ENCODE measurements at regions of chr10 and their contacts with region 1.

Region 1: GRCh38 chr10:103238506-103239252 is 7.0 kb upstream of the RPEL1 start:
- DNase-seq: peak; percentile 82 to 96
- H3K4me3 ChIP-seq: no peak overlapping the region
- H3K27ac ChIP-seq: peak overlapping the region; percentile 100
- H3K4me1 ChIP-seq: peaks cover 58% of the 10 kb centered on the region
- H3K27me3 ChIP-seq: no peaks in the 10 kb centered on the region
- CTCF ChIP-seq: peak; percentile 57; the same call in 1 of the 2 replicates

Region 2: DNA sequence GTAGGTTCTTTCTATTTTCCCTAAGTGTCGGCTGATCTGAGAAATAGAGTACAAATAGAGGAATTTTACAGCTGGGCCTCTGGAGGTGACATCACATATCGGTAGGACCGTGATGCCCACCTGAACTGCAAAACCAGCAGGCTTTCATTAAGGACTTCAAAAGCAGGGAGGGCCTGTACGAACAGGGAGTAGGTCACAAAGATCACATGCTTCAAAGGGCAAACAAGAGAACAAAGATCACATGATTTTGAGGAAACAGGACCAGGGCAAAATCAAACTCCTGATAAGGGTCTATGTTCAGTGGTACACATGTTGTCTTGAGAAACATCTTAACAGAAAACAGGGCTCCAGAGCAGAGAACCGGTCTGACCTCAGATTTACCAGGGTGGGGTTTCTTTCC is 231.7 kb before region 1 on chr10:
- CTCF ChIA-PET with region 1: no interaction called
- POLR2A ChIA-PET with region 1: no interaction called
- intact Hi-C with region 1: no loop called
- DNase-seq: no peak
- H3K4me3 ChIP-seq: no peak overlapping the region
- H3K27ac ChIP-seq: no peak overlapping the region
- H3K4me1 ChIP-seq: no peaks in the 10 kb centered on the region
- H3K27me3 ChIP-seq: no peaks in the 10 kb centered on the region
- CTCF ChIP-seq: no peak

Region 3: GRCh38 chr10:103111031-103111917 is 127.4 kb before region 1 on chr10:
- CTCF ChIA-PET with region 1: no interaction called
- POLR2A ChIA-PET with region 1: no interaction called
- intact Hi-C with region 1: loop called (anchors 10 kb)
- DNase-seq: no peak
- H3K4me3 ChIP-seq: no peak overlapping the region
- H3K27ac ChIP-seq: no peak overlapping the region
- H3K4me1 ChIP-seq: no peaks in the 10 kb centered on the region
- H3K27me3 ChIP-seq: no peaks in the 10 kb centered on the region
- CTCF ChIP-seq: no peak

Region 4: DNA sequence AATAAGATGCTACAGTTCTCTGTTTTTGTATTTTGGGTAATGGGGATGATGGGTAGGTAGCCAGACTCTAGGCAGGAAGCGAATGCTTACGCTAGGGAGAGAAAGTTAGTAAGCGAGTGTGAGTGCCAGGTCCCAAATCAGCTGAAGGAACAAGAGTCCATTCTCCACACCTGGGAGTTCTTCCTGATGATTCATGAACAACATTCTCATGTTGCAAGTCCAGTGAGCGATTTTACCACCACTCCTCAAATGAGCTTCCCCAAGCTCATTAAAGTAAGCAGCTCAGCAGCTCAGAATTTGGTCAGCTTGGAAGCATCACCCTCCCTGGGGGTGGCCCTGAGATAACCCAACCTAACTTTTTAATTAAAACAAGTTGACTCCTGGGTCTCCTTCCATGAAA is 589.4 kb after region 1 on chr10:
- CTCF ChIA-PET with region 1: no interaction called
- POLR2A ChIA-PET with region 1: no interaction called
- intact Hi-C with region 1: no loop called
- DNase-seq: peak; percentile 30 to 85
- H3K4me3 ChIP-seq: no peak overlapping the region
- H3K27ac ChIP-seq: peak overlapping the region; percentile 60
- H3K4me1 ChIP-seq: peaks cover 17% of the 10 kb centered on the region
- H3K27me3 ChIP-seq: no peaks in the 10 kb centered on the region
- CTCF ChIP-seq: no peak

Measured in PC-9 (cell line).